ENCODE measurements at regions of chr7 and their contacts with region 1.

Region 1: GRCh38 chr7:55946545-55946944 is 5.1 kb upstream of the MRPS17 start:
- DNase-seq: no peak
- H3K4me3 ChIP-seq: no peak overlapping the region
- H3K27ac ChIP-seq: no peak overlapping the region
- H3K4me1 ChIP-seq: no peaks in the 10 kb centered on the region
- H3K27me3 ChIP-seq: no peaks in the 10 kb centered on the region
- CTCF ChIP-seq: no peak
- EP300 ChIP-seq: no peak
- POLR2A ChIP-seq: no peak

Region 2: GRCh38 chr7:54141576-54141975 is 1805.0 kb before region 1 on chr7:
- intact Hi-C with region 1: loop called in 1 of 4 experiments (anchors 5 kb)
- DNase-seq: no peak
- H3K4me3 ChIP-seq: no peak overlapping the region
- H3K27ac ChIP-seq: no peak overlapping the region
- H3K4me1 ChIP-seq: no peaks in the 10 kb centered on the region
- H3K27me3 ChIP-seq: no peaks in the 10 kb centered on the region
- CTCF ChIP-seq: no peak
- EP300 ChIP-seq: no peak
- POLR2A ChIP-seq: no peak

Region 3: GRCh38 chr7:56074371-56074791 is 127.8 kb after region 1 on chr7:
- intact Hi-C with region 1: no loop called
- DNase-seq: peak; percentile 74 to 87 (median 85)
- H3K4me3 ChIP-seq: no peak overlapping the region
- H3K27ac ChIP-seq: no peak overlapping the region
- H3K4me1 ChIP-seq: no peaks in the 10 kb centered on the region
- H3K27me3 ChIP-seq: no peaks in the 10 kb centered on the region
- CTCF ChIP-seq: peak; percentile 76 to 86 (median 80)
- EP300 ChIP-seq: no peak
- POLR2A ChIP-seq: no peak

Measured in ovary (tissue), 10 donors.